Endothelial cell of umbilical vein (primary cell): ENCODE measurements at regions of chr1 and their contacts with region 1.

Region 1: GRCh38 chr1:226201029-226201593 is 14.6 kb upstream of the ACBD3 start:
- DNase-seq: no peak
- H3K4me3 ChIP-seq: no peak overlapping the region
- H3K27ac ChIP-seq: no peak overlapping the region
- H3K4me1 ChIP-seq: no peaks in the 10 kb centered on the region
- H3K27me3 ChIP-seq: peaks cover 0 to 1% of the 10 kb centered on the region in 2 experiments
- CTCF ChIP-seq: peak in 1 of 2 donors; percentile 40
- POLR2A ChIP-seq: no peak

Region 2: DNA sequence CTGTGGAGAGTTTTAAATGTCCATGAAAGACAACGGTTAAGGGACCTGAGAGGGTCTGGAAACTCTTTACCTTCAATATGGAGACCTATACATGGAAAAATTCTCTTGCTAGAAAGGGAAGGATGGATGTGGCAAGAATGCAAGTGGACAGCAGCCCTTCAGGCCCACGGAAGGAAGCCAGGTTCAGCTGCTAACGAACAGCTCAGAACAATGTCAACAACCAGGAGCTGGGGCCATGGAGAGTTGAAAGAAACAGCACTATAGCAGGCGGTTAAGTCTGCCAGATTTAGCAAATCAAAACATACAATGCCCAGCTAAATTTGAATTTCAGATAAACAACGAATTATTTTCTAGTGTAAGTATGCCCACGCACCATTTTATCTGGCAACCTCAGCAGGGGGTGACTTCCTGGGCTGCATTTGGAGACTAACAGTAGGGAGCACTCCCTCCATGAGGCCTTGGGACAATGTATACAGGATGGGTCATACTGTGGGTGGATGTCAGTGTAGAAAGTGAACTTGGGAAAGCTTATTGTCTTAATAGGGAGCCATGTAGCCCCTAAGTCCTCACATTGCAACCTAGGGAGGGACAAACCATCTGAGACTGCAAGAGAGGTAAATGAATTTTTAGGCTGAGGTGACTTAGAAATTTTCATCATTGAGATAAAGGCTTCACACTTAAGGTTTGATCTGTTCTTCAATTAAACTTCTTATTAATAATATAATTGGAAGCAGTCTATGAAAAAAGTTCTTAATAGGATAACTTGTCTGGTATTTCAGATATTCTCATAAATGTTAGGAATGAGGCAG is 146.4 kb before region 1 on chr1:
- CTCF ChIA-PET with region 1: no interaction called
- POLR2A ChIA-PET with region 1: no interaction called
- dilution Hi-C with region 1: no loop called
- intact Hi-C with region 1: no loop called
- DNase-seq: peak; percentile 68
- H3K4me3 ChIP-seq: no peak overlapping the region
- H3K27ac ChIP-seq: no peak overlapping the region
- H3K4me1 ChIP-seq: no peaks in the 10 kb centered on the region
- H3K27me3 ChIP-seq: no peaks in the 10 kb centered on the region
- CTCF ChIP-seq: no peak
- POLR2A ChIP-seq: no peak

Region 3: GRCh38 chr1:226135059-226135651 is 66.0 kb before region 1 on chr1:
- CTCF ChIA-PET with region 1: interaction called, 11 read pairs
- POLR2A ChIA-PET with region 1: no interaction called
- dilution Hi-C with region 1: no loop called
- intact Hi-C with region 1: no loop called
- DNase-seq: peak; percentile 37
- H3K4me3 ChIP-seq: no peak overlapping the region
- H3K27ac ChIP-seq: no peak overlapping the region
- H3K4me1 ChIP-seq: no peaks in the 10 kb centered on the region
- H3K27me3 ChIP-seq: peaks cover 0 to 5% of the 10 kb centered on the region in 2 experiments
- CTCF ChIP-seq: no peak
- POLR2A ChIP-seq: no peak

Region 4: DNA sequence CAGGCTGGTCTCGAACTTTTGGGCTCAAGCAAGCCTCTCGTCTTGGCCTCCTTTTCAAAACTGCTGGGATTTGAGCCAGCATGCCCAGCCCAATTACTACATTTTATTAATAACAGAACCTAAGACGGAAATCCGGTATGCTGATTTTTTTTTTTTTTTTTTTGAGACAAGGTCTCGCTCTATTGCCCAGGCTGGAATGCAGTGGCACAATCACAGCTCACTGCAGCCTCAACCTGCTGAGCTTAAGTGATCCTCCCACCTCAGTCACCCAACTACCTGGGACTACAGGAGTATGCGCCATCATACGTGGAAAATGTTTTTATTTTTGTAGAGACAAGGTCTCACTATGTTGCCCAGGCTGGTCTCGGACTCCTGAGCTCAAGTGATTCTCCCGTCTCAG is 34.8 kb before region 1 on chr1:
- CTCF ChIA-PET with region 1: interaction called, 11 read pairs
- POLR2A ChIA-PET with region 1: no interaction called
- dilution Hi-C with region 1: no loop called
- intact Hi-C with region 1: no loop called
- DNase-seq: no peak
- H3K4me3 ChIP-seq: no peak overlapping the region
- H3K27ac ChIP-seq: no peak overlapping the region
- H3K4me1 ChIP-seq: no peaks in the 10 kb centered on the region
- H3K27me3 ChIP-seq: no peaks in the 10 kb centered on the region
- CTCF ChIP-seq: no peak
- POLR2A ChIP-seq: no peak

Region 5: GRCh38 chr1:226186124-226187018 is 14.7 kb before region 1 on chr1 and contains the start of gene ACBD3:
- CTCF ChIA-PET with region 1: interaction called, 15 read pairs
- POLR2A ChIA-PET with region 1: no interaction called
- dilution Hi-C with region 1: no loop called
- intact Hi-C with region 1: no loop called
- DNase-seq: peak; percentile 82
- H3K4me3 ChIP-seq: peak within 1 kb of the TSS; percentile 68 to 93 (median 70)
- H3K27ac ChIP-seq: peak within 1 kb of the TSS; percentile 66
- H3K4me1 ChIP-seq: peaks cover 12% of the 10 kb centered on the region
- H3K27me3 ChIP-seq: no peaks in the 10 kb centered on the region
- CTCF ChIP-seq: peak in 1 of 2 donors; percentile 8
- POLR2A ChIP-seq: peak; percentile 84
- total RNA-seq, gene ACBD3: 36.4 and 37.0 TPM in 2 replicates

Region 6: GRCh38 chr1:226332947-226333346 is 131.8 kb after region 1 on chr1:
- CTCF ChIA-PET with region 1: interaction called, 23 read pairs
- POLR2A ChIA-PET with region 1: no interaction called
- dilution Hi-C with region 1: no loop called
- intact Hi-C with region 1: loop called (anchors 1 kb)
- DNase-seq: no peak
- H3K4me3 ChIP-seq: no peak overlapping the region
- H3K27ac ChIP-seq: no peak overlapping the region
- H3K4me1 ChIP-seq: no peaks in the 10 kb centered on the region
- H3K27me3 ChIP-seq: no peaks in the 10 kb centered on the region
- CTCF ChIP-seq: no peak
- POLR2A ChIP-seq: no peak

Region 7: DNA sequence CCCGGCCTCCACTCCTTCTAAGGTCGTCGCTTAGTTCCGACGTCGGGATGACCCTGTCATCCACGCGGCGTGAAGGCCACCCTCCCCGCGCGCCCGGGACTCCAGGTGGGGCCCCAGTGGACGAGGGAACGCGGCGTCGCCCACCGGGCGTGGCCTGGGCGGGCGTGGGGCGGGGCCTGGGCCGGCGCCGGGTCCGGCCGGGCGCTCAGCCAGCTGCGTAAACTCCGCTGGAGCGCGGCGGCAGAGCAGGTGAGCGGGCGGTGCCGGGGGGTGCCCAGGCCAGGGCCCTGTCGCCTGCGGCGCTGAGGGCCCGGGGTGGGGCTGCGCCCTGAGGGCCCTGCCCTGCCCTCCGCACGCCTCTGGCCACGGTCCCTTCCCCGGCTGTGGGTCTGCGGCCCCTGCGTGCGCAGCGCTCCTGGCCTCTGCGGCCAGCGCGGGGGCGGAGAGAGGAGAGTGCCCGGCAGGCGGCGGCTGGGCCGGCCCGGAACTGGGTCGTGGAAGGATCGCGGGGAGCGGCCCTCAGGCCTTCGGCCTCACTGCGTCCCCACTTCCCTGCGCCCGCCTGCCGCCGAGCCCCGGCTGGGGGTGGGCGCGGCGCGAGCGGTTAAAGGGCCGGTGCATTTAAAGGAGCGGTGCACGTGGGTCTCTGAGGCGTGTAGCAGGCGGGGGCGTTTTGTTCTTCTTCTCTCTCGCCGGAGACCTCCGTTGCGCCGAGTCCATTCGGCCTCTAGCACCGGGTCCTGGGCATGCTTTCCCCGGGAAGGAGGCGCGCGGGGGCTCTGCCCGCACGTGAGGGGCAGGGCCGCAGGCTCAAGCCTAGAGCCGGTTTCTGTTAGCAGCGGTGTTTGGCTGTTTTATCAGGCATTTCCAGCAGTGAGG is 669.5 kb after region 1 on chr1 and contains the start of gene PSEN2:
- CTCF ChIA-PET with region 1: no interaction called
- POLR2A ChIA-PET with region 1: no interaction called
- dilution Hi-C with region 1: no loop called
- intact Hi-C with region 1: no loop called
- DNase-seq: peak; percentile 51
- H3K4me3 ChIP-seq: peak within 1 kb of the TSS; percentile 55 to 65 (median 61)
- H3K27ac ChIP-seq: no peak within 1 kb of the TSS
- H3K4me1 ChIP-seq: peaks cover 16% of the 10 kb centered on the region
- H3K27me3 ChIP-seq: no peaks in the 10 kb centered on the region
- CTCF ChIP-seq: peak in 1 of 2 donors; percentile 27
- POLR2A ChIP-seq: no peak
- total RNA-seq, gene PSEN2: 12.5 and 17.1 TPM in 2 replicates